Posterior vena cava (tissue), 2 donors: ENCODE measurements at regions of chr2 and their contacts with region 1.

Region 1: DNA sequence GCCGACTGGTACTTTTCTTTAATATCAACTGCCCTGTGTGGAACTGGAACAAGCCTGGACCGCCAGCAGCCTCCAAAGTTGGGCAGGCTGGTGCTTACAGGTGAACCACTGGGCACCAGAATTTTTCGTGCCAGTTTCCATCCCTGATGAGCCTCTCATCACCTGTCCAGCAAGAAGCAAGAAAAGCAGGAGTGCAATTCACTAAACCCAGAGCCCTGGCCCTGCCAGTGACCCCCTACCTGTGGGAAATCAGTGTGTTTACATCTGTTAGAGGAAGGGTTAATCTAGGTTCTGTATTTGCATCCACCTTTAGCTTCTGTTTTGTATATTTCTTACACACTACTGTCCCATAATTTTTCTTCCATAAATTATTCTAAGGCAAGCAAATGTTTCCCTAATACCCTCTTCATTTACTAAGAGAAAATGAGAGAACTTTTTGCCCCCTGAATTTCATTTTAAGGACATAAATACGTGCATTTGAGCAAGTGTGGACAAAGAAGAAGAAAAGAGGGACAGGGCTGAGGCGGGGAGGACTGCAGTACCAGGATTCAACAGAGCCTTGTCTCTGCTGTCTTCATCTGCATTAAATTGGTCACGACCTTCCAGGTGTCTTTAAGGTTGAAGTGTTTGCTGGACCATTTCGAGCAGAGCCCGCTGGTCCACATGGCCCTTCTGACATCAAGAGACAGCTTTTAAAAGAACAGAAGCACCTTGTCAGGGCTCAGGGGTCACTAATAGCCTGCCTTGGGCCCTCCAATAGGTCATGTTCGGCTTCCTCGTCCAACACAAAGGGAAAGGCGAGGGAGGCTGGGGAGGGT is 763.1 kb downstream of the BCL11A start:
- DNase-seq: peak; percentile 38

Region 2: DNA sequence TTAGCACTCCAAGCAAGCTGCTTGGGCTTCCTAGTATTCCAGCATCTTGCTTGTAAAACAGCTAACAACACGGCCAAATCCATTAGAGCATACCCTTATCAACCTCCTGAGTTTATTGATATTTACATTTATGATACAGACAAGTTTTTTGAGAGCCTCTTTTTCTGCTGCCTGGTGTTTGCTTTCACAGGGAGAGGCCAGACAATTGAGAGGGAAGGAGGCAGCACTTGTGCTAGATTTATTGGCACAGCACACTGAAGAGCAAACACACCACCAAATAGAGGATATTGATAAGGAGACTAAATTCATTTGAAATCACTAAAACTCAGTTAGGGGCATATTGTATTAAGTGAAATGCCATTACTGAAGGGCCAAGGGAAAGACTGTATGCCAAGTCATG is 406.9 kb before region 1 on chr2:
- intact Hi-C with region 1: loop called in 1 of 2 experiments (anchors 5 kb)
- DNase-seq: no peak

Region 3: GRCh38 chr2:59761966-59762365 is 28.4 kb before region 1 on chr2:
- intact Hi-C with region 1: no loop called
- DNase-seq: no peak